Endothelial cell of umbilical vein (primary cell): ENCODE measurements at regions of chr7 and their contacts with region 1.

Region 1: DNA sequence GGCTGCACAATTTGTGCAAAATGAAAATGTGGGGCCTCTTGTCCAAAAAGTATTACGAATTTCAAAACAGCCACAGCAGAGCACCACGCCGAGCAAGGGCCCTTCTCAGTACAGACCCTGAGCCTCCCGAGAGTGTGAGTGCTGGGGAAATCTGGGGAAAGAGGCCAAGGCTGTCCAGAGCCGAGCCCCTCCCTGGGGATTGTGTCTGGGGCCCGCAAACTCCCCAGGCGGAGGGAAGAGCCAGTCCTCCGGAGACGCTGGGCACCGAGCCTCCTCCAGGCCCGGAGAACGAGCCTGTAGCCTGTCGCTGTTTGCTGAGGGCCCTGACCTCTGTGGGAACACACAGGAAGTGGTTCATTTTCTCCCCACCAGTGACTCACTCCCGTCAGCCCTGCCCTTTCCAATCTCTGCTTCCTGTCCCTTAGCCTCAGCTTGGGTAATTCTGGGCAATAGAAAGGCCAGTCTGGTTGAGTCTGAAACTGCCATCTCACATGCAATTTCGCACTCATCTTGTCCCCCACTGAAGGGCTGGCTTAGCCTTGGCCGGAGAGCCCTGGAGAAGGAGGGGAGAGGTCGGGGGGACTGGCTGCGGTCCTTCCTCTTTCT is 19.5 kb upstream of the GNA12 start:
- DNase-seq: peak; percentile 94
- H3K4me3 ChIP-seq: peak overlapping the region in 1 of 3 experiments; percentile 34
- H3K27ac ChIP-seq: peak overlapping the region; percentile 94
- H3K4me1 ChIP-seq: peaks cover 22% of the 10 kb centered on the region
- H3K27me3 ChIP-seq: no peaks in the 10 kb centered on the region
- CTCF ChIP-seq: no peak
- POLR2A ChIP-seq: peak; percentile 46

Region 2: DNA sequence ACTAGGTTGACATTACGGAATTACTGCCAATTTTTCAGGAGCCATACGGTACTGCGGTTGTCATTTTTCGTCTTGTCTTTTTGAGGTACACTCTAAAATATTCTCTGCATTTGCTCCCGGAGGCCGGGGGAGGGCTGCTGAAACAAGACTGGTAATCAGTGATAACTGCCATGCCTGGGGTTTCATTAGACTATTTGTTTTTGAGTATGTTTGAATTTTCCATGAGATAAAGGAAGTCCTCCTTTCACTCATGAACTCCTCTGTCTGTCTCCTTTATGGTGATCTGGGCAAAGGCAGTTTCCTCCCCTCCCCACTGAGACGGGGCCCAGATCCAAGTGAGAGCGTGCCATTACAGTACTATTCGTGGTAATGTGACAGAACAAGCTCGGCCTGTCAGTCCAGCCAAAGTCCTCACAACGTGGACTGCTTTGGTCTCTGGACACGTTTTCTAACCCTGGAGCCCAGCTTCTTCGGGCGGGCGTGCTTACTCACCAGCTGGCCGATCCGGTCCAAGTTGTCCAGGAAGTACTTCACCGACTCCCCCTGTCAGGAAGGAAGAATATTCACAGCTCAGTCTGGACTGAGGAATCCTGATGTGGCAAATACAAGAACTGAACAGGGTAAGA is 130.5 kb before region 1 on chr7:
- CTCF ChIA-PET with region 1: no interaction called
- POLR2A ChIA-PET with region 1: interaction called, 3 read pairs
- dilution Hi-C with region 1: no loop called
- intact Hi-C with region 1: loop called (anchors 1 kb)
- DNase-seq: peak; percentile 81
- H3K4me3 ChIP-seq: no peak overlapping the region
- H3K27ac ChIP-seq: peak overlapping the region; percentile 54
- H3K4me1 ChIP-seq: peaks cover 33% of the 10 kb centered on the region
- H3K27me3 ChIP-seq: no peaks in the 10 kb centered on the region
- CTCF ChIP-seq: no peak
- POLR2A ChIP-seq: no peak

Region 3: GRCh38 chr7:2831015-2831414 is 32.5 kb before region 1 on chr7:
- CTCF ChIA-PET with region 1: no interaction called
- POLR2A ChIA-PET with region 1: no interaction called
- dilution Hi-C with region 1: no loop called
- intact Hi-C with region 1: no loop called
- DNase-seq: no peak
- H3K4me3 ChIP-seq: no peak overlapping the region
- H3K27ac ChIP-seq: no peak overlapping the region
- H3K4me1 ChIP-seq: no peaks in the 10 kb centered on the region
- H3K27me3 ChIP-seq: no peaks in the 10 kb centered on the region
- CTCF ChIP-seq: no peak
- POLR2A ChIP-seq: no peak

Region 4: GRCh38 chr7:2844165-2844898 is 19.2 kb before region 1 on chr7 and contains the start of gene GNA12:
- CTCF ChIA-PET with region 1: no interaction called
- POLR2A ChIA-PET with region 1: no interaction called
- dilution Hi-C with region 1: no loop called
- intact Hi-C with region 1: loop called (anchors 1 kb)
- DNase-seq: peak; percentile 100
- H3K4me3 ChIP-seq: peak within 1 kb of the TSS; percentile 57 to 89 (median 61)
- H3K27ac ChIP-seq: no peak within 1 kb of the TSS
- H3K4me1 ChIP-seq: peaks cover 2% of the 10 kb centered on the region
- H3K27me3 ChIP-seq: no peaks in the 10 kb centered on the region
- CTCF ChIP-seq: no peak
- POLR2A ChIP-seq: peak; percentile 30
- total RNA-seq, gene GNA12: 56.0 and 63.0 TPM in 2 replicates

Region 5: GRCh38 chr7:3154912-3155494 is 291.4 kb after region 1 on chr7:
- CTCF ChIA-PET with region 1: interaction called, 15 read pairs
- POLR2A ChIA-PET with region 1: no interaction called
- dilution Hi-C with region 1: no loop called
- intact Hi-C with region 1: loop called (anchors 1 kb)
- DNase-seq: peak; percentile 64
- H3K4me3 ChIP-seq: no peak overlapping the region
- H3K27ac ChIP-seq: no peak overlapping the region
- H3K4me1 ChIP-seq: no peaks in the 10 kb centered on the region
- H3K27me3 ChIP-seq: peaks cover 0 to 15% of the 10 kb centered on the region in 2 experiments
- CTCF ChIP-seq: peak; percentile 52 to 55
- POLR2A ChIP-seq: no peak

Region 6: GRCh38 chr7:3673524-3673923 is 810.0 kb after region 1 on chr7:
- CTCF ChIA-PET with region 1: interaction called, 21 read pairs
- POLR2A ChIA-PET with region 1: no interaction called
- dilution Hi-C with region 1: no loop called
- intact Hi-C with region 1: loop called (anchors 10 kb)
- DNase-seq: peak; percentile 25
- H3K4me3 ChIP-seq: no peak overlapping the region
- H3K27ac ChIP-seq: no peak overlapping the region
- H3K4me1 ChIP-seq: no peaks in the 10 kb centered on the region
- H3K27me3 ChIP-seq: no peaks in the 10 kb centered on the region
- CTCF ChIP-seq: peak; percentile 37 to 54
- POLR2A ChIP-seq: no peak